Astrocyte of the cerebellum (primary cell): ENCODE measurements at regions of chr10 and their contacts with region 1.

Region 1: DNA sequence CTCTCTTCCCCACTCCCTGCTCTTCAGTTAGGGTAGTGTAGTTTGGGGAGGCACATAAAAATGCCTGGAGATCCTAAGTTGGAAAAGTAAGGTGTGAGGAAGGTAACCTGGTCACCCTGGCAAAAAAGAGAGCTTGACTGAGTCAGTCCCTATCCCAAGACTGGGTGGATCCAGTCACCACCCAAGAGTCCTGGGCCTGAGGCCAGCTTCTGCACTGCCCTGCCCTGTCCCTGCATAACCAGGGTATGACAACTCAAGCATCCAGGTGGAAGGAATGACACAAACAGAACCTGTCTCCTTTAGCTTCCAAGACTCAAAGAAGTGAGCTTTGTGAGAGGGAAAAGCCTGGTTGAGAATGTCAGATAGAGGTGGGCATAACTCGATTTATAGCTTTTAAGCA is 26.9 kb upstream of the SORBS1 start:
- DNase-seq: no peak
- H3K4me3 ChIP-seq: no peak overlapping the region
- CTCF ChIP-seq: no peak

Region 2: GRCh38 chr10:95406651-95407280 is 181.3 kb before region 1 on chr10:
- in situ Hi-C with region 1: loop called (anchors 25 kb)
- DNase-seq: no peak
- H3K4me3 ChIP-seq: no peak overlapping the region
- CTCF ChIP-seq: no peak

Region 3: GRCh38 chr10:95544783-95545500 is 43.1 kb before region 1 on chr10:
- in situ Hi-C with region 1: no loop called
- DNase-seq: no peak
- H3K4me3 ChIP-seq: no peak overlapping the region
- CTCF ChIP-seq: no peak

Region 4: DNA sequence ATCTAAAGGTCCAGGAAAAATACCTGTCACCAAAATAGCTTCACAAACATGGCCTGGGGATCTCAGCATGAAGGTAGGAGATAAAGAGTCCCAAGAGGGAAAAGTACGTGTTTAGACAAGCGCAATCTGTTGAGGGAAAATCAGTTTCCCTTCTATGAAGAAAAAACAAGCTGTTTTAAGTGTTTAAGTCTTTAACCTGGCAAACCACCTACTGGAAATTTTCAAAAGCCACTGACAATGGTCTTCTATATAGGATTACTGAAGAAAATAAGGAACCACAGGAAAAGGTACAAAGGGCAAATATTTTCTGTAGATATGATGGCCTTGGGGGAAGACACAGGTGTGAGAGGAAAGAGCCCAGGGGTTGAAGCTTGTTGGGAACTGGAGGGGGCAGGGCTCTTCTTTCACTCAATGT is 47.3 kb after region 1 on chr10:
- in situ Hi-C with region 1: no loop called
- DNase-seq: no peak
- H3K4me3 ChIP-seq: no peak overlapping the region
- CTCF ChIP-seq: no peak